ENCODE measurements at regions of chr10 and their contacts with region 1.

Region 1: GRCh38 chr10:127990846-127991542 is 84.1 kb downstream of the PTPRE start:
- DNase-seq: peak; percentile 97
- H3K4me3 ChIP-seq: peak overlapping the region in 1 of 3 experiments; percentile 83
- H3K27ac ChIP-seq: peak overlapping the region; percentile 94
- H3K4me1 ChIP-seq: peaks cover 72% of the 10 kb centered on the region
- H3K27me3 ChIP-seq: no peaks in the 10 kb centered on the region
- CTCF ChIP-seq: no peak
- POLR2A ChIP-seq: peak; percentile 60

Region 2: DNA sequence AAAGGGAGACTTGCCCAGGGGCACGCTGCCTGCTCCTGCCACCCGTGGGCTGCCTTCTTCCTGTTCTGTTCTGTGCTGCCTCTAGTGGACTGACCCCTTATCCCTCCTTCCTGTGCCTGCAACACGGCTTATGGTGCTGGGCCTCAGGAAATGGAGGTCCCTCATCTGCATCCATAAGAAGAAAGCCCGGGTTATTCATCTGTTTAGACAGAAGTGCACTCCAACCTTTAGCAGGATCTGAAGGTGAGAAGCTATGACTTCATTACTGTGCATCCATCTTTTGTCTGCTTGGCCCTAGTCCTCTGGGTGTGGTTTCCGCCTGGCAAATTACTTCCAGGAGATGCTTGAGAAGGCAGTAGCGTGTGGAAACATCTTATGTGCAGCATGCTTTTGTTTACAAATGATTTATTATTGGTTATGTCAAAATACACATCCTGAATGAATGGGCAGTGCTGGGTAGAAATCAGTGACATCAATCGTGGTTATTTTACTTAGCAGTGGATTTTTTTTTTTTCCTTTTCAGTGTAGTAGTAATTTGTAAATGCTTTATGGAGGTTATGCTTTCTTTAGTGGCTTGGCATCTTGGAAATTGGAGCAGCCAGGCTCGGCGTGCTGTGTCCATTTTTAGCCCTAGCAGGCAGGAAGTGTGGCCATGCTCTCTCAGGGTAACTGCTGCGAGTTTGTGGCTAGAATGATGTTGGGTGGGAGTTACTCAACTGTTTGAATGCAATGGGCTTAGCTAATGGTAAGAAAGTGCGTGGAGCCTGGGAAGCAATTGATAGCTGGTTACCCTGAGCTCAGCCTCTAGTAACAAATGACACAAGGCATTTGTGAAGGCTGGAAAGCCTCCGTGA is 71.3 kb before region 1 on chr10:
- CTCF ChIA-PET with region 1: interaction called, 5 read pairs
- POLR2A ChIA-PET with region 1: no interaction called
- dilution Hi-C with region 1: no loop called
- intact Hi-C with region 1: loop called (anchors 1 kb)
- DNase-seq: peak; percentile 83
- H3K4me3 ChIP-seq: no peak overlapping the region
- H3K27ac ChIP-seq: peak overlapping the region; percentile 31
- H3K4me1 ChIP-seq: peaks cover 53% of the 10 kb centered on the region
- H3K27me3 ChIP-seq: no peaks in the 10 kb centered on the region
- CTCF ChIP-seq: peak; percentile 57 to 61
- POLR2A ChIP-seq: no peak

Region 3: DNA sequence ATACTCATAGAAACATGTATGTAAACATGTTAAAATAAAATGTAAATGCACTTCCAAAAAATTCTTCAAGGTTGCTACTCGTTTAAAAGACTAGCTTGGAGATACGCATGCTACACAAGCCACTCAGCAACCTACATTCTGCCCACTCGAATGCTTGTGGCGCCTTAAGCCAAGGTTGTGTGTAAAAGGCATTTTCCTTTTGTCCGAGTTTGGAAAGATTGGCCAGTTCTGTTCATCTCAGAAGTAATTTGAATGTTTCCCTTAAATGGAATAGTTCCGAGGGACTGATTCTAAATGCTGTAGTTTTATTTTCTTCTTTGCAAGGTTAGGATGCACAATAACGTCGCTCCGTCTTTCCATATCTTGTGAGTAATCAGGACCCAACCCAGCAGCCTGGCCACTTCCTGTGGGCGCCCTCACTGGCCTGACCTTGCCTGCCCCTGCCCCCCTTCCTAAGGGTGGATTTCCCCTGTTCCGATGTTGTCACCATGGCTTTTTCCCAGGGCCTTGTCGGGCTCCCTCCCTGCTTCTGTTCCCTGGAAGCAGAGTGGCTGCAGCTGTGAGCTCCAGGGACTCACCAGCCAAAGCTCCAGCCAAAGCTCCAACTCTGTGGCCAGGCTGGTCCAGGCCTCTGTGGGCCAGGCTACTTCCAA is 13.5 kb before region 1 on chr10:
- CTCF ChIA-PET with region 1: interaction called, 31 read pairs
- POLR2A ChIA-PET with region 1: interaction called, 3 read pairs
- dilution Hi-C with region 1: no loop called
- intact Hi-C with region 1: loop called (anchors 1 kb)
- DNase-seq: peak; percentile 96
- H3K4me3 ChIP-seq: peak overlapping the region in 1 of 3 experiments; percentile 20
- H3K27ac ChIP-seq: peak overlapping the region; percentile 79
- H3K4me1 ChIP-seq: peaks cover 42% of the 10 kb centered on the region
- H3K27me3 ChIP-seq: no peaks in the 10 kb centered on the region
- CTCF ChIP-seq: no peak
- POLR2A ChIP-seq: peak; percentile 54

Region 4: DNA sequence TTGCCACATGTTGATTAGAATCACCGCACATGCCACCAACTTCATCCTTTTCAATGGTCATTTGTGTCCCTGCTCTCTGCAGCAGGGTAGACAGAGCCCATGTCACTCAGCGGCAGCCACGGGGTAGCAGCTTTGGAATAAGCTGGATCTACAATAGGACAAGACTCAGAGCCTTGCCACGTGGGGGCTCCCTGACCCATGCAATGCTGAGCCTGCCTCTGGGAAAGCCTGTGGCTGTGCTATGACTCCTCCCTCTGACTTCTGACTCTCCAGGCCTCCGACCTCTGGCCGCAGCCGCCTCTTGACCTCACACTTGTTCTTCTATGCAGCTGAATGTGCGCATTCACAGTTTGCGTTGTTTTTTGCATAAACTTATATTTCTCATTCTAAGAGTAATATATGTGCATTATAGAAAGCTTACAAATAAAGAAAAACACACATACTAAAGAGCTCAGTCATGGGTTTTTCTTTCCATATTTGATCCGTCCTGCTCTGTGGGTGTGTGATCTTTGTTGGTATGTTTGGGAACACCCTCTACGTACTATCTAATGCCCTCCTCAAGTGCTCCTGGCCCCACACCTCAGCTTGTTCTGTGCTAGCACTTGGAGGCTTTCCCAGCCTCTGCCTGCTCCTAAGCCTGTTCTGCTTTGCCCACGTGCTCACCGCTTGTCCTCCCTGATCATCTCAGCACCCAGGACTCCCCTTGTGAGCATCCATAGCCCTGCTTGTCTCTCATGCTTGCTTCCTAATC is 333.3 kb after region 1 on chr10:
- CTCF ChIA-PET with region 1: no interaction called
- POLR2A ChIA-PET with region 1: no interaction called
- dilution Hi-C with region 1: no loop called
- intact Hi-C with region 1: no loop called
- DNase-seq: no peak
- H3K4me3 ChIP-seq: no peak overlapping the region
- H3K27ac ChIP-seq: no peak overlapping the region
- H3K4me1 ChIP-seq: no peaks in the 10 kb centered on the region
- H3K27me3 ChIP-seq: no peaks in the 10 kb centered on the region
- CTCF ChIP-seq: no peak
- POLR2A ChIP-seq: no peak

Region 5: GRCh38 chr10:129305046-129305445 is 1314.1 kb after region 1 on chr10:
- CTCF ChIA-PET with region 1: no interaction called
- POLR2A ChIA-PET with region 1: no interaction called
- dilution Hi-C with region 1: no loop called
- intact Hi-C with region 1: loop called (anchors 5 kb)
- DNase-seq: peak; percentile 73
- H3K4me3 ChIP-seq: peak overlapping the region in 1 of 3 experiments; percentile 7
- H3K27ac ChIP-seq: peak overlapping the region; percentile 61
- H3K4me1 ChIP-seq: peaks cover 14% of the 10 kb centered on the region
- H3K27me3 ChIP-seq: no peaks in the 10 kb centered on the region
- CTCF ChIP-seq: no peak
- POLR2A ChIP-seq: no peak

Measured in endothelial cell of umbilical vein (primary cell).